Naive thymus-derived CD4-positive, alpha-beta T cell (primary cell): ENCODE measurements at regions of chr10 and their contacts with region 1.

Region 1: GRCh38 chr10:73625884-73626752 is 15.2 kb downstream of the MYOZ1 start:
- DNase-seq: peak; percentile 76 to 97 (median 91)
- ATAC-seq: peak; percentile 97
- H3K4me3 ChIP-seq: peak overlapping the region; percentile 99
- H3K4me3 Mint-ChIP-seq: peak overlapping the region; percentile 91 to 100 (median 96)
- H3K27ac ChIP-seq: peak overlapping the region; percentile 87
- H3K27ac Mint-ChIP-seq: peak overlapping the region; percentile 95 to 100 (median 97)
- H3K4me1 ChIP-seq: peaks cover 7 to 9% of the 10 kb centered on the region in 2 donors
- H3K4me1 Mint-ChIP-seq: peaks cover 0 to 29% (median 24%) of the 10 kb centered on the region in 7 donors
- H3K27me3 ChIP-seq: no peaks in the 10 kb centered on the region
- H3K27me3 Mint-ChIP-seq: no peaks in the 10 kb centered on the region

Region 2: DNA sequence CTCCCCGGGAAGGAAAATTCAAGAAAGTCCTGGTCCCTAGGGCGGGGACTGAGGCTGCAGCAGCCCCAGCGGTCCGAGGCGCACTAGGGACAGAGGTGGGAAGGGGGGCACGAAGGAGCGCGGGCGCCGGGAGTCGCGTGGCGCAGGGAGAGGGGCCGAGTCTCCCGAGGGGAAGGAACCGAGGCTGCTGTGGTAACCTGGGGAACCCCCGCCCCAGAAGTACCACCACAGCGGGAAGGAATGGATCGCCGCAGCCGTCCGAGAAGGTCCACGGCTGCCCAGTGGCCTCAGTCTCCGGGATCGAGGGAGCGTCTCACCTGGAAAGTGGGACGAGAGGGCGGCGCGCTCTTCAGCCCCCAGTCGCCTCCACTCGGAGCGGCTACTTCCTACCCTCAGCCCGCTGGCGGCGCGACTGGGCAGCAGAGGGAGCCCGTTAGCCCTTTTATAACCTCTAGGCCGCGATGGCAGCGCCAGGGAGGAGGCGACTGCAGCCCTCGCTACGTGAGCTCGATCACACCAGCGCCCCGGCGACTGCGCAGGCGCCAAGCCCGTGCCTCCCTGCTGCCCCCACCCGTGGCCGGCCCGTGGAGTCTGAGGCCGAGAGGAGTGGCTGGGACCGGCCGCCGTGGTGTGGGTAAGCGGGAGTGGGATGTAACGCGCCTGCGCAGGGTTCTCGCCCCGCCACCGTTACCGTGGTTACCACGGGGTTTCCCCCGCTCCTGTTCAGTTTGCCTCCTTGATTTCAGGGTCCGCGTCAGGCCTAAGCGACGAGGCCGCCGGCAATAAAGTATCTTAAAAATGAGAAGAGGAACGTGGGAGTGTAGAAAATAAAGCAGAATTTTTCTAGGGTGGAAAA is 529.4 kb before region 1 on chr10 and contains the start of gene P4HA1:
- CTCF ChIA-PET with region 1: no interaction called
- POLR2A ChIA-PET with region 1: no interaction called
- intact Hi-C with region 1: loop called in 1 of 2 experiments (anchors 2 kb)
- DNase-seq: peak; percentile 88 to 99 (median 92)
- ATAC-seq: peak; percentile 95
- H3K4me3 ChIP-seq: peak within 1 kb of the TSS; percentile 60
- H3K4me3 Mint-ChIP-seq: peak within 1 kb of the TSS; percentile 91 to 97 (median 96)
- H3K27ac ChIP-seq: peak within 1 kb of the TSS; percentile 97
- H3K27ac Mint-ChIP-seq: peak within 1 kb of the TSS; percentile 76 to 98 (median 92)
- H3K4me1 ChIP-seq: peaks cover 0 to 12% of the 10 kb centered on the region in 2 donors
- H3K4me1 Mint-ChIP-seq: peaks cover 13 to 44% (median 38%) of the 10 kb centered on the region in 7 donors
- H3K27me3 ChIP-seq: no peaks in the 10 kb centered on the region
- H3K27me3 Mint-ChIP-seq: peaks cover 0 to 3% (median 0%) of the 10 kb centered on the region in 5 donors
- total RNA-seq, gene P4HA1: 10.5 to 74.7 (median 14.7) TPM

Region 3: DNA sequence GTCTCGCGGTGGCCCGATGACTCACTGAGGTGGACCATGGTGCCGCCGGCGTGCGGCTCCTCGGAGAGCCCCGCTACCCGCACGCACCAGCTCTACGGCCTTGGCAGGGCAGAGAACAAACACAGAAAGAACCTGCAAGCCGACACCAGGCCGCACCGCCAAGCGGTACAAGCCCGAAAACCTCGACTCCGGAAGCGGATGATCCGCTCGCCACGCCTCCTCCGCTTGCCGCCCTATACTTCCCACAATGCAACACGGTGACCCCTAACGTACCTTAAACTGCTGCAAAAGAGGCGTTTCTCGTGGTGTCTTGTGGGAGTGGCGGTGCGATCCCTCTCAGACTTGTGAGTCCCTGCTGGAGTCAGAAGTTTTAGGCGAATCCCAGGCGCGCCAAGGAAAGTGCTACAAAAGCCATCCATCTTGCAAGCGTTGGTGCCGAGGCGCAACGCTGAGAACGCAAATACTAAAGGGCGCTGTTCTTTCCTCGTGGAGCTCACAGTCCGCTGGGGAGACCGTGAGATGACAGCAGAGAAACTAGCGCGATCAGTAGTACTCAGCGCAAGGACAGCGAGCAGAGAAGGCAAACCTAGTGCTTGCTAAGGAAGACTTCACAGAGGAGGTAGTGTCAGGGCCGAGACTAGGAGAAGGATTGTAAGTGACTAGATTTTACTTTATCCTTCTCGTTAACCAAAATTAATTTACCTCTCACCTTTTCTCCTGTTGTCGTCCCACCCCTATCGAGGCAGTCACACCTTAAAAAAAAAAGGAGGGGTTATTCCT is 373.5 kb before region 1 on chr10 and contains the start of gene MRPS16:
- CTCF ChIA-PET with region 1: no interaction called
- POLR2A ChIA-PET with region 1: no interaction called
- intact Hi-C with region 1: loop called (anchors 1 to 2 kb)
- DNase-seq: peak; percentile 75 to 95 (median 93)
- ATAC-seq: peak; percentile 98
- H3K4me3 ChIP-seq: peak within 1 kb of the TSS; percentile 94
- H3K4me3 Mint-ChIP-seq: peak within 1 kb of the TSS; percentile 95 to 100 (median 99)
- H3K27ac ChIP-seq: peak within 1 kb of the TSS; percentile 92
- H3K27ac Mint-ChIP-seq: peak within 1 kb of the TSS; percentile 91 to 97 (median 94)
- H3K4me1 ChIP-seq: peaks cover 18 to 26% of the 10 kb centered on the region in 2 donors
- H3K4me1 Mint-ChIP-seq: peaks cover 19 to 50% (median 37%) of the 10 kb centered on the region in 7 donors
- H3K27me3 ChIP-seq: no peaks in the 10 kb centered on the region
- H3K27me3 Mint-ChIP-seq: peaks cover 0 to 2% (median 0%) of the 10 kb centered on the region in 5 donors
- total RNA-seq, gene MRPS16: 29.6 to 99.9 (median 47.6) TPM

Region 4: DNA sequence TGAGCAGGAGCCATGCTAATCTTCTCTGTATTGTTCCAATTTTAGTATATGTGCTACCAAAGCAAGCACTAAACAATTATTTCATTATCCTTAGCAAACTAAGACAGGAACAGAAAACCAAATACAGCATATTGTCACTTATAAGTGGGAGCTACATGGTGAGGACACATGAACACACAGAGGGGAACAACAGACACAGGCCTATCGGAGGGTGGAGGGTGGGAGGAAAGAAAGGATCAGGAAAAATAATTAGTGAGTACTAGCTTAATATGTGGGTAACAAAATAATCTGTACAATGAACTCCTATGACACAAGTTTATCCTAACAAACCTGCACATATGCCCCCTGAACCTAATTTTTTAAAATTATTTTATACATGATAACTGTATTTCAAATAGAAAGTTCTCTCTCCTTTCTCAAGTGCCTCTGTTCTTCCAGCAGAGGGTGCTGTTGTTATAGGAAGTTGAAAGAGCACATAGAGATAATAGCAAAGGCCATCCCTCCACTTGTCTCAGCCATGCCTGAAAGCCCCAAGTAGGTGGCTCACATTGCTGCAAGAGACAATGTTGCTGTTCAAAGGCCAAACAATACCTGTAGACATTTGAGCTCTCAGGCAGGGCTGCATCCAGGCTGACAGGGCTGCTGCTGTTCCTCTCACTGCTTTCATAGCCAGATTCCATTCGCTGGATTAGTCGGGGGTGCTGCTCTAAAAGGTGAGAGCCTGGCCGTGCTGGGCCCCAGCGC is 96.9 kb before region 1 on chr10:
- CTCF ChIA-PET with region 1: interaction called, 3 read pairs
- POLR2A ChIA-PET with region 1: interaction called, 3 read pairs
- intact Hi-C with region 1: loop called (anchors 1 kb)
- DNase-seq: peak in 8 of 9 donors; percentile 23 to 82 (median 73)
- ATAC-seq: peak; percentile 93
- H3K4me3 ChIP-seq: no peak overlapping the region
- H3K4me3 Mint-ChIP-seq: no peak overlapping the region
- H3K27ac ChIP-seq: no peak overlapping the region
- H3K27ac Mint-ChIP-seq: no peak overlapping the region
- H3K4me1 ChIP-seq: no peaks in the 10 kb centered on the region
- H3K4me1 Mint-ChIP-seq: no peaks in the 10 kb centered on the region
- H3K27me3 ChIP-seq: no peaks in the 10 kb centered on the region
- H3K27me3 Mint-ChIP-seq: peaks cover 0 to 2% (median 0%) of the 10 kb centered on the region in 5 donors

Region 5: DNA sequence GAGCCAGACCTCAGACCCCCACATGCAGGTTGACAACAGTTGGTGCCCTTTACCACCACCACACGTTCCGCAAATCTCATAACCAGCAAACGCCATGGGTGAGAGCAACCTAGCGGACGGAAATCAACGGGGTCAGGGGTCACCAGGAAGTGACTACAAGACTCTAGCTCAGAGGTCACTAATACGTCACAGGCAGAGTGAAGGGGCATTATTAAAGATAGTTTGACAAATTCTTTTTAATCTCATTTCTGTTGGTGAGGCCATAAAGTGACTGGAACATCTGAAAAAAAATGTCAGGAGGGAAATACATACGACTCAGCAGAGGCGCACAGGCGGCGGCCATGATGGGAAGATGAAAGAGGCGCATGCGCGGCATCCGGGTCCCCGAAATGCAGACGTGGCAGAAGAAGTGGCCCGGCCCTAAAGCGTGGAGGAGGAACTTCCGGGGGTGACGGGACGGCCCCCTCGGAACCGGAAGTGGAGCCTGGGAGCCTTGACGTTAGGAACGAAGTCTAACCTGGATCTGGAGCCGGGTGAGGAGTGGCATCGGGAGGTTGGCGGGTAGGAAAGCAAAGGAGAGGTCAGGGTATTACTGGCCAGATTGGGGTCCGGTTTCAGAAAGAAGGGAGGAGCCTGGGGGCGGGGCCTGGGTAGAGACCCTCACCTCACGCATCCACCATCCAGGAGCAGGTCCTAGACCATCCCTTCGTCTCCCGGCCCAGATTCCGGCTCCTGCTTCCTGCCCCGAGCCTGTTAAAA is 118.0 kb after region 1 on chr10 and contains the start of gene SEC24C:
- CTCF ChIA-PET with region 1: no interaction called
- POLR2A ChIA-PET with region 1: no interaction called
- intact Hi-C with region 1: loop called (anchors 5 kb)
- DNase-seq: peak; percentile 87 to 97 (median 95)
- ATAC-seq: peak; percentile 93
- H3K4me3 ChIP-seq: peak within 1 kb of the TSS; percentile 93
- H3K4me3 Mint-ChIP-seq: peak within 1 kb of the TSS; percentile 92 to 100 (median 100)
- H3K27ac ChIP-seq: peak within 1 kb of the TSS; percentile 91
- H3K27ac Mint-ChIP-seq: peak within 1 kb of the TSS; percentile 98 to 100 (median 100)
- H3K4me1 ChIP-seq: peaks cover 22 to 27% of the 10 kb centered on the region in 2 donors
- H3K4me1 Mint-ChIP-seq: peaks cover 18 to 47% (median 39%) of the 10 kb centered on the region in 7 donors
- H3K27me3 ChIP-seq: no peaks in the 10 kb centered on the region
- H3K27me3 Mint-ChIP-seq: no peaks in the 10 kb centered on the region
- total RNA-seq, gene SEC24C: 68.7 to 122 (median 95.4) TPM

Region 6: GRCh38 chr10:73810735-73811465 is 184.8 kb after region 1 on chr10:
- CTCF ChIA-PET with region 1: no interaction called
- POLR2A ChIA-PET with region 1: interaction called, 3 read pairs
- intact Hi-C with region 1: loop called in 1 of 2 experiments (anchors 1 kb)
- DNase-seq: peak; percentile 46 to 76 (median 71)
- ATAC-seq: peak; percentile 18
- H3K4me3 ChIP-seq: peak overlapping the region; percentile 69
- H3K4me3 Mint-ChIP-seq: peak overlapping the region; percentile 88 to 97 (median 94)
- H3K27ac ChIP-seq: peak overlapping the region; percentile 97
- H3K27ac Mint-ChIP-seq: peak overlapping the region; percentile 94 to 98 (median 96)
- H3K4me1 ChIP-seq: peaks cover 26 to 31% of the 10 kb centered on the region in 2 donors
- H3K4me1 Mint-ChIP-seq: peaks cover 31 to 54% (median 49%) of the 10 kb centered on the region in 7 donors
- H3K27me3 ChIP-seq: no peaks in the 10 kb centered on the region
- H3K27me3 Mint-ChIP-seq: no peaks in the 10 kb centered on the region

Region 7: DNA sequence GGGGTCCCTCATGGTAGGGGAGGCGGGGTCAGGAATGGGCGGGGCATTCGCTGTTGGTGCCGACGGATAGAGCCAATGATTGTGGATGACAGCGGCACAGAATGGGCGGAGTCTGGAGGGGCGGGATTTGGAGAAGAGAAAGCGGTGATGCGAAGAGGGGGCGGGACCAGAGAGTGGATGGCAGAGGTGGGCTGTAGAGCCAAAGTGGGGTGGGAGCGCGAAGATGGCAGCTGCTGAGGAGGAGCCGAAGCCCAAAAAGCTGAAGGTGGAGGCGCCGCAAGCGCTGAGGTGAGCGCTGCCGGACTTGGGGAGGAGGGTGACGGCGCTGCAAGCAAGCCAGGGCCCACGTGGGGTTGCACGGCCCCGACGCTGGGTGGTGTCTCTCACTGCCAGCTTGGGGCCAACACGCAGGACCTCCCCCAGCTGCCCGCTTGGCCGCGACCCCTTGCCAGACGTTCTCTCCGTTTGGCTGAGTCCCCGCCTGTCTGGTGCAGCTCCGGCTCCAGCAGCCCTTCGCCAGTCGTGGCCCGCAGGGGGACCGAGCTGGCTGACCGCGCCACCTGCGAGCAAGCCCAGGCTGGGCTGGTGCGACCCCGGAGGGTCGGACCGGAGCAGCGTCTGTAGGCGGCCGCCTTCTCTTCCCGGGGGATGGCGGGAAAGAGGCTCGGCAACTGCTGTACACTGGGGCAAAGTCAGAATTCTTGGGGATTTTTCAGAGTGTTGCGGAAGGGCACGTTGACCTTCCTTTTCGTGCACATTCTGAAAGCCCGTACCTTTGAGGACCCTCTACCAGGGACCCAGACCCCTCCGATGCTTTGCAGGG is 525.1 kb after region 1 on chr10 and contains the start of gene ADK:
- CTCF ChIA-PET with region 1: no interaction called
- POLR2A ChIA-PET with region 1: no interaction called
- intact Hi-C with region 1: loop called in 1 of 2 experiments (anchors 1 kb)
- DNase-seq: peak in 8 of 9 donors; percentile 96 to 100 (median 99)
- ATAC-seq: peak; percentile 99
- H3K4me3 ChIP-seq: peak within 1 kb of the TSS; percentile 90
- H3K4me3 Mint-ChIP-seq: no peak within 1 kb of the TSS
- H3K27ac ChIP-seq: peak within 1 kb of the TSS; percentile 84
- H3K27ac Mint-ChIP-seq: peak within 1 kb of the TSS in 5 of 9 donors; percentile 8 to 78 (median 47)
- H3K4me1 ChIP-seq: peaks cover 17 to 23% of the 10 kb centered on the region in 2 donors
- H3K4me1 Mint-ChIP-seq: peaks cover 36 to 56% (median 47%) of the 10 kb centered on the region in 7 donors
- H3K27me3 ChIP-seq: no peaks in the 10 kb centered on the region
- H3K27me3 Mint-ChIP-seq: no peaks in the 10 kb centered on the region
- total RNA-seq, gene ADK: 20.7 to 32.6 (median 25.0) TPM

Region 8: DNA sequence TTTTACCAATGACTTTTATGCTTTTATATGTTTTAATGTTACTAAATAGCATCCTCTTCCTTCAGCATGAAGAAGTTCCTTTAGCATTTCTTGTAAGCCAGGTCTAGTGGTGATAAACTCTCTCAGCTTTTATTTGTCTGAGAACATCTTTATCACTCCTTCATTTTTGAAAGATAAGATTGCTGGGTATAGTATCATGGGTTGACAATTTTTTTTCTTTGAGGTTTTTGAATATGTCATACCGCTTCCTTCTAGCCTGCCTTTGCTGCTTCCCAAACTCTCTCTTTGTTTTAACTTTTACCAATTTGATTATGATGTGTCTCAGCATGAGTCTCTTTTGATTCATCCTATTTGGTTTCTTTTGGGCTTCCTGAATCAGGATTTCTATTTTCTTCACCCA is 1092.1 kb after region 1 on chr10:
- CTCF ChIA-PET with region 1: no interaction called
- POLR2A ChIA-PET with region 1: no interaction called
- intact Hi-C with region 1: no loop called
- DNase-seq: no peak
- ATAC-seq: no peak
- H3K4me3 ChIP-seq: no peak overlapping the region
- H3K4me3 Mint-ChIP-seq: peak overlapping the region in 1 of 10 donors; percentile 25
- H3K27ac ChIP-seq: no peak overlapping the region
- H3K27ac Mint-ChIP-seq: peak overlapping the region in 2 of 9 donors; percentile 11 to 41
- H3K4me1 ChIP-seq: no peaks in the 10 kb centered on the region
- H3K4me1 Mint-ChIP-seq: peaks cover 0 to 6% (median 4%) of the 10 kb centered on the region in 7 donors
- H3K27me3 ChIP-seq: no peaks in the 10 kb centered on the region
- H3K27me3 Mint-ChIP-seq: no peaks in the 10 kb centered on the region